Activated naive CD4-positive, alpha-beta T cell treated with anti-CD3 and anti-CD28 coated beads, Interleukin-2, amount 10 ng/mL, durations not matched to agents 7 days and 5 days (primary cell): ENCODE measurements at regions of chr1 and their contacts with region 1.

Region 1: DNA sequence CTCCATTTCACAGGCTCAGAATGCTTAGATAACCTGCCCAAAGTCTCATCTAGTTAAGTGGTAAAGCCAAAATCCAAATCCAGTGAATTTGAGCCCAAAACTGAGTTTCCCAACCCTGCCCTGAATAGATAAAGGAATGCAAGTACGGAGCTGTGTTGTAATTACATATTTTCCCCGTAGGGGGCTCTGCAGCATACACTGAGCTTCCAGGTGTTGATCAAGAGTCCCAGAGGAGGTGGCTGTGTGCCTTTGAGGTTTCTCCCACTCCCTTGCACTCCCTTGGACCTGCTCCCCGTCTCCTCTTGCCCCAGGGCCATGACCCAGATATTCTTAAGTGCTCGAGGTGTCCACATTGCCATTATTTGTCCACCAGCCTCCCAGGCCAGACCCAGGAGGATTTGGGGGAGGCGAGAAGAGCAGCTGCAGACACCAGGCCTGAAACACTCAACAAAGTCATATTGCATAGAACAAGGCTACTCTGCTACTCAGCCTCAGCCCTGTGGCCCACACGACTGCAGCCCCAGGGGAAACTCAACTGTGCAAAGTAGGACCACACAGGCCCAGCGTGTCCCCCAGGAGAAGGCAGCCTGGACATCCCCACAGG is 18.4 kb upstream of the LY9 start:
- DNase-seq: peak; percentile 64
- H3K4me3 Mint-ChIP-seq: no peak overlapping the region
- H3K27ac Mint-ChIP-seq: peak overlapping the region; percentile 5
- H3K4me1 Mint-ChIP-seq: peaks cover 41% of the 10 kb centered on the region
- H3K27me3 Mint-ChIP-seq: no peaks in the 10 kb centered on the region

Region 2: GRCh38 chr1:160610569-160611242 is 166.9 kb before region 1 on chr1:
- CTCF ChIA-PET with region 1: no interaction called
- DNase-seq: no peak
- H3K4me3 Mint-ChIP-seq: no peak overlapping the region
- H3K27ac Mint-ChIP-seq: peak overlapping the region; percentile 73
- H3K4me1 Mint-ChIP-seq: peaks cover 53% of the 10 kb centered on the region
- H3K27me3 Mint-ChIP-seq: no peaks in the 10 kb centered on the region

Region 3: GRCh38 chr1:160726498-160727315 is 50.9 kb before region 1 on chr1:
- CTCF ChIA-PET with region 1: interaction called, 61 read pairs
- DNase-seq: peak; percentile 75
- H3K4me3 Mint-ChIP-seq: no peak overlapping the region
- H3K27ac Mint-ChIP-seq: no peak overlapping the region
- H3K4me1 Mint-ChIP-seq: peaks cover 22% of the 10 kb centered on the region
- H3K27me3 Mint-ChIP-seq: no peaks in the 10 kb centered on the region

Region 4: GRCh38 chr1:160795951-160796383 is 18.4 kb after region 1 on chr1 and contains the start of gene LY9:
- CTCF ChIA-PET with region 1: interaction called, 50 read pairs
- DNase-seq: peak; percentile 89
- H3K4me3 Mint-ChIP-seq: peak within 1 kb of the TSS; percentile 96
- H3K27ac Mint-ChIP-seq: peak within 1 kb of the TSS; percentile 99
- H3K4me1 Mint-ChIP-seq: peaks cover 63% of the 10 kb centered on the region
- H3K27me3 Mint-ChIP-seq: no peaks in the 10 kb centered on the region

Region 5: DNA sequence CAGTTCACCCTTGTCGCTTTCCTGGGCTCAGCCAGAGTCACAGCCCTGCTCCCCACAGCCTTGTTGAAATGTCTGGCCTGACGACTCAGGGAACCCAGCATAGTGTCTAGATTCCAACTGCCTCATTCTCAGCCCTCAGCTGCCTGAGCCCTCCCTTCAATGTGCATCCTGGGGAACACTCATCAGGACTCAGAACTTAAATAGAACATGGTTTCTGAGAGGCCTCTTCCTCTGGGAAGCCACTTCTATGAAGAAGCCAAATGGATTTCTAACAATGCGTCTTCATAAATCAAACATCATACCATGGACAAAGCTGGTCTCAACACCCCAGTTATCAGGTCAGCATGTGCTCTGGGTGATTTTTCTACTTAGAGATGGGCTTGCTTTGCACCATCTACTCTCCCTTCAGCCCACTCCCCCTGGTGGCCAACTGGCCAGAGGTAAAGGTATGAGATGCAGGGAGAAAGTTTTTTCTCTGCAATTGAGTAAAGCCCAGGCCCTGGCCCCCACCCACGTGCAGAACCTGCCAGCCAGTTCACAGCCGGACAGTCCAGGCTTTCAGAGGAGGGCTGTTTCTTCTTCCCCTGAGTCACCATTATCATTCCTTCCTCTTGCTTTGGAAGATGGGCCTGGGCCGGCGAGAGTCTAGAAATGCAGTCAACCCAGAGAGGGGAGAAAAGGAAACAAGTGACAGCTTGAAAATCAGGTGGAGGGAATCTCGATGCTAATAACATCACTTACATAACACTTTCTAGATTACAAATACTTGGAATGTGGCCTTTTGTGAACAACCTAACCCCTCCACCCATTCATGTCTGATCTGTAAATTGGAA is 52.9 kb after region 1 on chr1:
- CTCF ChIA-PET with region 1: interaction called, 157 read pairs
- DNase-seq: peak; percentile 88
- H3K4me3 Mint-ChIP-seq: no peak overlapping the region
- H3K27ac Mint-ChIP-seq: no peak overlapping the region
- H3K4me1 Mint-ChIP-seq: peaks cover 26% of the 10 kb centered on the region
- H3K27me3 Mint-ChIP-seq: no peaks in the 10 kb centered on the region

Region 6: GRCh38 chr1:160904783-160905616 is 127.4 kb after region 1 on chr1:
- CTCF ChIA-PET with region 1: no interaction called
- DNase-seq: no peak
- H3K4me3 Mint-ChIP-seq: no peak overlapping the region
- H3K27ac Mint-ChIP-seq: no peak overlapping the region
- H3K4me1 Mint-ChIP-seq: no peaks in the 10 kb centered on the region
- H3K27me3 Mint-ChIP-seq: peaks cover 10% of the 10 kb centered on the region

Region 7: GRCh38 chr1:161013488-161014230 is 236.1 kb after region 1 on chr1:
- CTCF ChIA-PET with region 1: no interaction called
- DNase-seq: peak; percentile 80
- H3K4me3 Mint-ChIP-seq: peak overlapping the region; percentile 68
- H3K27ac Mint-ChIP-seq: peak overlapping the region; percentile 96
- H3K4me1 Mint-ChIP-seq: peaks cover 28% of the 10 kb centered on the region
- H3K27me3 Mint-ChIP-seq: no peaks in the 10 kb centered on the region